ENCODE measurements at regions of chr2 and their contacts with region 1.

Region 1: DNA sequence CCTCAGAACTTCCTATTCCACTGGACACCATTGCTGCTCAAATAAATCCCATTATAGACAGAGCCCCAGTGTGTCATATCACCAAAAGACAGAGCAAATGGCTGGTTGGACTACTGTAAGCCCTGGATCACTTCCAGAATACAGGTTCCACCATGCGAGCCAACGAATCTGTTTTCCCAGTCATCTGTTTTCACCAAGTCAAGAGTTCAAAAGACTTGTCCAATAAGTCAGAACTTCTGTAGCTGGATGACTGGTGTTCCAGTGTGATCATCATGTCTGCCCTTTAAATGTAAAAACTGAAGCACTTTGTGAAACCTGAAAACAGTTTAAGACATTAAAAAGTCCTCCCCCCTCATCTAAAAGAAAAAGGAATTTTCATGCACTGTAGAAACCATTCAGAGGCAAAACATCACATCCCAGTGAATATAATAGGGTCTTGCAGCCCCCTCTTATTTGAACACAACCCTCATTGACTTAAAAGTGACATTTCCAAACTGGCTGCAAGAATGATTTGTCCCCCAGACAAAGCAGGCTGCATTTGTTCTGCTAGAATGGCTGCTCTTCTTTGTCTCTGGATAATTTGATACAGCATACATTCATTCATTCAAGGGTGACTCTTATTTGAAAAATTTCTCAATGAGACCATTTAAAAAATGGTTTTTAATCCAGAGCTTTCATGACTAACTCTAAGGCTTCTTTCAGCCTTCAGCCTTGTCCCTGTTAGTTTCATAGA is 64.6 kb upstream of the TANC1 start:
- DNase-seq: no peak
- H3K4me3 ChIP-seq: no peak overlapping the region
- H3K27ac ChIP-seq: no peak overlapping the region
- H3K4me1 ChIP-seq: no peaks in the 10 kb centered on the region
- H3K27me3 ChIP-seq: no peaks in the 10 kb centered on the region
- CTCF ChIP-seq: no peak

Region 2: GRCh38 chr2:158953926-158954763 is 50.3 kb after region 1 on chr2:
- intact Hi-C with region 1: loop called (anchors 5 kb)
- DNase-seq: peak in 1 of 2 donors; percentile 89
- H3K4me3 ChIP-seq: no peak overlapping the region
- H3K27ac ChIP-seq: peak overlapping the region; percentile 63 to 69
- H3K4me1 ChIP-seq: peaks cover 0 to 16% of the 10 kb centered on the region in 2 donors
- H3K27me3 ChIP-seq: no peaks in the 10 kb centered on the region
- CTCF ChIP-seq: no peak

Region 3: DNA sequence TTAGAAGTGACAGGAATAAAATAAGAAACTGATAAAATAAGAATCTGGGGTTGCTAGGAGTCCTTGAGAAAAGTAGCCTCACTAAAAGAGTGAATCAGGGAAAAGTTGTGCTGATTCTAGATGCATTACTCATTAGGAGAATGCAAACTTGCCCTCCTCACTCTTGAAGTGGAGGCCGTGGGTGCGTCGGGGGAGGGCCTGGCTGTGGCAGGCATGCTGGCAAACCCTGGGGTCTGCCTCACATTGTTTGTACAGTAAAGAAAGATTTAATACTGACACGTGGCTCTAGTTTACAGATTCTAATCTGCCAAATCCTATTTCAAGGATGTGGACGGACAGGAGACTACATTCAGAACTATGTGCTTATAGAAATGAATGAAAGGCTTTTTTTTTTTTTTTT is 106.5 kb after region 1 on chr2:
- intact Hi-C with region 1: loop called (anchors 10 kb)
- DNase-seq: no peak
- H3K4me3 ChIP-seq: no peak overlapping the region
- H3K27ac ChIP-seq: peak overlapping the region; percentile 43 to 60
- H3K4me1 ChIP-seq: peaks cover 0 to 25% of the 10 kb centered on the region in 2 donors
- H3K27me3 ChIP-seq: no peaks in the 10 kb centered on the region
- CTCF ChIP-seq: no peak

Region 4: DNA sequence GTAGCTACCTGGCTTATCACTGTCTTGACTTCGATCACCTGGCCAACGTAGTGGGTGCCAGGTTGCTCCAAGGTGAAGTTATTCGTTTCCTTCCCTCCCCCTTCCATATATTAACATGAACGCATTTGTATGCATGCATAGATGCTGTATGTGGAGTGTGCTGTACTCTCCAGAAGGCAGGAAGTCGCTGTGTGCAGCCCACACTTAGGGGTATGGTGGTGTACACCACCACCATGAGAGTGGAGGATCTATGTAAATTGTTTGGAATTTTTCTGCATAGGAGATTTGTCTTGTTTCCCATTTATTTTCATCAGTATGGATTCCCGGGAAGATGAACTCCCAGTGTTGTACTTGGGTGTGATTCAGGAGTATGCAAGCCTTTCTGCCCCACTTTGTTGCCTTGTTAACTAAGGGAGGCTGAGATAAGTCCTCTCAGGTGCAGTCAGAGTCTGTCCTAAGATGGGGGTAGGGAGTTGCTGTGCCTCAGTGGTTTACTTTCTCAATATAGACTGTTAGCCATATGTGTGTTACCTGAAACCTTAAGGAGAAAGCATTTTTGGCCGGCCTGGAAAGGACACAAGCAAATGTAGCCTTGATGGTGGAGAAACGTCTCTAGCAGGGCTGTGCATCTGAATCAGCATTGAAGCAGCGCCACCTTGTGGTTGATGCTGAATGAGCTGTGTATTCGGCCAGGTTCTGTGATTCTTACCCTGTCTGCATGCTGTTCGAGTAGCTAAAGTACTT is 214.4 kb after region 1 on chr2:
- intact Hi-C with region 1: loop called (anchors 1 kb)
- DNase-seq: peak in 1 of 2 donors; percentile 92
- H3K4me3 ChIP-seq: no peak overlapping the region
- H3K27ac ChIP-seq: no peak overlapping the region
- H3K4me1 ChIP-seq: peaks cover 0 to 2% of the 10 kb centered on the region in 2 donors
- H3K27me3 ChIP-seq: no peaks in the 10 kb centered on the region
- CTCF ChIP-seq: peak; percentile 78 to 91 (median 80)

Measured in ascending aorta (tissue), 2 donors.